MCF 10A (cell line): ENCODE measurements at regions of chr12 and their contacts with region 1.

Region 1: DNA sequence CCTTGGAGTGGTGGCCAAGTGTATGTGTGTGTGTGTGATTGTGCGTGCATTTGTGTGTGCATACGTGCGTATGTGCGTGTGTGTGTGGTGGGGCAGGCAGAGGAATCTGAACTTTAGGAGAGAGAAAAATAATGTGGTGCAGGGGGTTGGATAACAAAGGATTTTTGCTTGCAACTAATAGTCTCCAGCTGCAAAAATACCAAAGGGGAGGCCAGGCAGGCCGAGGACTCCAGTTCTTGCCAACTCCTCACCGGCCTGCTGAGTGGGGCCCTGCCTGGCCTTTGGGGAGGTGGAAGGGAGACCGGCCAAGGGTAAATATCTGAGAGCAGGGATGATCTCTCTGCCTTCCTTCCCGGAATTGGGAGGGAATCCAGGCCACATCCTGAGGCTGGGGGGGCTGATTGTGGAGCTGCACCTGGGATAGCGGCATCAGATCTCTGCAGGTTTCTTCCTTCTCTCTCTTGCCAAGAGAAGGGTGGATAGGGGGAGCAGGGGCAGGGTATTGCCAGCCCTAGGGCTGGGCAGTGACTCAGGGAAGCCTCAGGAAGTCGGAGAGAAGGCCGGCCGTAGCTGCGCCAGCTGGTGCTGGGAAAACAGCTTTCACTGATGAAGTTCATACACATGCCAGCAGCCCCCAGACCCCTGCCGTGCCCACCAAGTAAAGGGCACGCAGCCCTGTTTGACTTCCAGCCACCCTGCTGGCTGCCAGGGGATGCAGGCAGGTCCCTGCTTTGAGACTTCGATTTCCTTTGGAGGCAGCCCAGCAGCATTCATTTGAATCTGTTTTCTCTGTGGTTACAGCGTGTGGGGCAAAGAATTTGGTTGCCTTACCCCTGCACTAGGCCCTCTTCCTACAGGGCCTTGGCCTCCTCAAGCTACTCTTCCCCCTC is 4.6 kb upstream of the LRP1-AS start:
- DNase-seq: peak; percentile 89
- H3K4me3 Mint-ChIP-seq: peak overlapping the region; percentile 29
- H3K27ac Mint-ChIP-seq: peak overlapping the region; percentile 70
- H3K4me1 Mint-ChIP-seq: peaks cover 57% of the 10 kb centered on the region
- H3K27me3 Mint-ChIP-seq: no peaks in the 10 kb centered on the region
- CTCF ChIP-seq: no peak

Region 2: GRCh38 chr12:56636675-56637540 is 515.1 kb before region 1 on chr12:
- CTCF ChIA-PET with region 1: no interaction called
- POLR2A ChIA-PET with region 1: no interaction called
- intact Hi-C with region 1: no loop called
- DNase-seq: peak; percentile 99
- H3K4me3 Mint-ChIP-seq: peak overlapping the region; percentile 95
- H3K27ac Mint-ChIP-seq: peak overlapping the region; percentile 87
- H3K4me1 Mint-ChIP-seq: peaks cover 48% of the 10 kb centered on the region
- H3K27me3 Mint-ChIP-seq: no peaks in the 10 kb centered on the region
- CTCF ChIP-seq: peak; percentile 64

Region 3: DNA sequence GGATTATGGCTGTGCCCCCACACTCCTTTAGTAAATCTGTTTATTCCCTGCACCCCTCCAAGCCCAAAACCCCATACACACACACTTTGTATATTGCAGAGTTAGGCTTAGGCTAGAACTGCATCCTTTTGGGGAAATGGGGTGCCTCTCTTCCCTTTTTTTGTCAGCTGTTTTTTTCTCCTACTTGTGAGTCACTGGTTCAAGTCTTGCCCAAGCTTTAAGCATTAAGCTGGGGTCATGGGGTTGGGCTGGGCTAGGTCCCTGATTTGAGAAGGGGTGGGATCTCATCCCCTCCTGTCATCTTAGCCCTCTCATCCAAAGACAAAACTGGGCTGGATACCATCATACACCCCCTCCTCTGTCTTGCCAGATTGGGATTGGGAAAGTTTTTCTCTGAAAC is 22.1 kb before region 1 on chr12:
- CTCF ChIA-PET with region 1: interaction called, 10 read pairs
- POLR2A ChIA-PET with region 1: interaction called, 36 read pairs
- intact Hi-C with region 1: no loop called
- DNase-seq: peak; percentile 52
- H3K4me3 Mint-ChIP-seq: peak overlapping the region; percentile 86
- H3K27ac Mint-ChIP-seq: no peak overlapping the region
- H3K4me1 Mint-ChIP-seq: peaks cover 47% of the 10 kb centered on the region
- H3K27me3 Mint-ChIP-seq: no peaks in the 10 kb centered on the region
- CTCF ChIP-seq: no peak

Region 4: DNA sequence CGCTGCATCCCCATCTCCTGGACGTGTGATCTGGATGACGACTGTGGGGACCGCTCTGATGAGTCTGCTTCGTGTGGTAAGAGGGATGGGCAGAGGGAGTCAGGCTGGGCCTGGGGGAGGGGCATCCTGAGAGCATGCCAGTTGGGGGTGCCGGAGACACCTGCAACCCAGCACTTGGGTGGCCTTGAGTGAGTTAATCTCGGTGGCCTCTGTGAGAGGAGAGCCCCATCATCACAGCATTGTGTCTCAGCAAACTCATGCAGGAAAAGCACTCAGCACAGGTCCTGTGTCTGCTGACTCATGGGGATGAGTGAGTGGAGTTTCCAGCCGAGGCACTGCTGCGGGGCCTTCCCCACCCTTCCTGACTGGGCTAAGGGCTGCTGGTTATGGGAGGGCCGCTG is 15.0 kb after region 1 on chr12:
- CTCF ChIA-PET with region 1: interaction called, 8 read pairs
- POLR2A ChIA-PET with region 1: interaction called, 17 read pairs
- intact Hi-C with region 1: loop called (anchors 1 kb)
- DNase-seq: peak; percentile 88
- H3K4me3 Mint-ChIP-seq: no peak overlapping the region
- H3K27ac Mint-ChIP-seq: peak overlapping the region; percentile 67
- H3K4me1 Mint-ChIP-seq: peaks cover 43% of the 10 kb centered on the region
- H3K27me3 Mint-ChIP-seq: no peaks in the 10 kb centered on the region
- CTCF ChIP-seq: no peak

Region 5: DNA sequence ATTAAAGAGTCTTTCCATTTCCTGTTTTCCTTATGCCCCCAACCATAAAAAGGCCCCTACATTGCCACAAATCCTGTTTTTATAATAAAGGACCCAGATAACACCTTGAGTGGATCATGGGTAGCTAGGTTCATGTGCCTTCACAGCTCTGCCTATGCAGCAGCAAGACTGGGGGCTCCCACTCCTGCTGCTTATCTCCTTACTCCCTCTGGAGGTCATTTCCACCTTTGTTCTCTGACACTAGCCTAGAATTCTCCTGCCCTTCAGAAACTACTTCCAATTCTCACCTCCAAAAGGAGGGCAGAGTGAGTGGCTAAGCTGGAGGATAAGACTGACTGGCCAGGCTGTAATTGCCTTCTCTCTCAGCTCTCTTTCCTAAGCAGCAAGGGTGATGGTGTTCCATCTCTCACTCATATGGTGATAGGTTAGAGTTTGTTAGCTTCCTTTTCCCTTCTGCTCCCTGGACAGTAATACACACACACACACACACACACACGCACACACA is 119.0 kb after region 1 on chr12:
- CTCF ChIA-PET with region 1: no interaction called
- POLR2A ChIA-PET with region 1: no interaction called
- intact Hi-C with region 1: no loop called
- DNase-seq: no peak
- H3K4me3 Mint-ChIP-seq: no peak overlapping the region
- H3K27ac Mint-ChIP-seq: no peak overlapping the region
- H3K4me1 Mint-ChIP-seq: no peaks in the 10 kb centered on the region
- H3K27me3 Mint-ChIP-seq: no peaks in the 10 kb centered on the region
- CTCF ChIP-seq: no peak